ENCODE measurements at regions of chr17 and their contacts with region 1.

Region 1: GRCh38 chr17:49788478-49789242 is at the start of gene KAT7:
- DNase-seq: peak; percentile 99
- ATAC-seq: peak; percentile 96
- H3K4me3 ChIP-seq: peak within 1 kb of the TSS; percentile 91
- H3K27ac ChIP-seq: peak within 1 kb of the TSS; percentile 99
- H3K4me1 ChIP-seq: peaks cover 6% of the 10 kb centered on the region
- H3K27me3 ChIP-seq: no peaks in the 10 kb centered on the region
- CTCF ChIP-seq: peak in 1 of 3 experiments; percentile 7; a peak in 1 of 6 replicates
- EP300 ChIP-seq: peak; percentile 37 to 48; a peak in 1 of 4 replicates
- POLR2A ChIP-seq: peak; percentile 89
- RAD21 ChIP-seq: no peak
- polyA plus RNA-seq, gene KAT7: 6.6 to 8.7 TPM

Region 2: GRCh38 chr17:49343273-49343672 is 445.4 kb before region 1 on chr17:
- CTCF ChIA-PET with region 1: no interaction called
- POLR2A ChIA-PET with region 1: no interaction called
- RAD21 ChIA-PET with region 1: no interaction called
- SMC1A ChIA-PET with region 1: no interaction called
- in situ Hi-C with region 1: no loop called
- intact Hi-C with region 1: loop called (anchors 2 kb)
- DNase-seq: no peak
- ATAC-seq: peak; percentile 28
- H3K4me3 ChIP-seq: no peak overlapping the region
- H3K27ac ChIP-seq: peak overlapping the region; percentile 47
- H3K4me1 ChIP-seq: peaks cover 32% of the 10 kb centered on the region
- H3K27me3 ChIP-seq: no peaks in the 10 kb centered on the region
- CTCF ChIP-seq: no peak
- EP300 ChIP-seq: no peak
- POLR2A ChIP-seq: no peak
- RAD21 ChIP-seq: no peak

Region 3: DNA sequence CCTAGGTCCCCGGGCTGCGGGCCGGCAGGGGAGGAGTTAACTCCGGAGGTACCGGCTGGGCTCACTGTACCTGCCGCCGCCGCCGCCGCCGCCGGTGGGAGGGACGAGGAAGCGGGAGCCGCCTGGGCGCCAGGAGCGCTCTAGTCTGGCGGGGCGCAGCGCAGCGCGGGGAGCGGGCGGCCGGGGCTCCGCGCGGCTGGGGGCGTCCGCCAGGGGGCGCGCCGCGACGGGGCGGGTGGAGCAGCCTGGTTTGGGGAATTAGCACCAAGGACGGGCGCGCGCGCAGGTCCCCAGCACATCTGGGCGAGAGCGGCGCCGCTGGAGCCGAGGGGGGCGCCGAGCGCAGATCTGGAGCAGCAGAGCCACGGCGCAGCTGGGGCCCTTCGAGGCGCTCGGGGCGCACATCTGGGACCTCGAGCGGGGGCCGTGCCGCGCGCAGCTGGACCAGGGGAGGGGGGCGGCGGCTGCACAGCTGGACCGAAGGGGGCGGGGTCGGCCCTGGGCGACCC is 213.0 kb before region 1 on chr17 and contains the start of gene NXPH3:
- CTCF ChIA-PET with region 1: interaction called, 8 read pairs
- POLR2A ChIA-PET with region 1: interaction called, 3 read pairs
- RAD21 ChIA-PET with region 1: no interaction called
- SMC1A ChIA-PET with region 1: no interaction called
- in situ Hi-C with region 1: loop called (anchors 5 kb)
- intact Hi-C with region 1: no loop called
- DNase-seq: no peak
- ATAC-seq: peak; percentile 72
- H3K4me3 ChIP-seq: peak within 1 kb of the TSS; percentile 72
- H3K27ac ChIP-seq: no peak within 1 kb of the TSS
- H3K4me1 ChIP-seq: peaks cover 7% of the 10 kb centered on the region
- H3K27me3 ChIP-seq: peaks cover 2 to 8% of the 10 kb centered on the region in 2 experiments; a peak in 3 of 4 replicates
- CTCF ChIP-seq: peak; percentile 17 to 56 (median 45); a peak in 3 of 6 replicates
- EP300 ChIP-seq: no peak
- POLR2A ChIP-seq: no peak
- RAD21 ChIP-seq: peak; percentile 43
- polyA plus RNA-seq, gene NXPH3: not detected

Region 4: GRCh38 chr17:49739641-49740271 is 48.9 kb before region 1 on chr17:
- CTCF ChIA-PET with region 1: interaction called, 4 read pairs
- POLR2A ChIA-PET with region 1: interaction called, 6 read pairs
- RAD21 ChIA-PET with region 1: interaction called, 6 read pairs
- SMC1A ChIA-PET with region 1: interaction called, 16 read pairs
- in situ Hi-C with region 1: no loop called
- intact Hi-C with region 1: no loop called
- DNase-seq: no peak
- ATAC-seq: peak; percentile 77
- H3K4me3 ChIP-seq: peak overlapping the region; percentile 31; the same call in 1 of the 2 replicates
- H3K27ac ChIP-seq: peak overlapping the region; percentile 79
- H3K4me1 ChIP-seq: peaks cover 44% of the 10 kb centered on the region
- H3K27me3 ChIP-seq: no peaks in the 10 kb centered on the region
- CTCF ChIP-seq: no peak
- EP300 ChIP-seq: 0 out of 4 replicates have a peak, but pooled peaks of 1 of the 2 experiments have one; percentile 13
- POLR2A ChIP-seq: peak; percentile 45; the same call in 1 of the 2 replicates
- RAD21 ChIP-seq: no peak

Region 5: DNA sequence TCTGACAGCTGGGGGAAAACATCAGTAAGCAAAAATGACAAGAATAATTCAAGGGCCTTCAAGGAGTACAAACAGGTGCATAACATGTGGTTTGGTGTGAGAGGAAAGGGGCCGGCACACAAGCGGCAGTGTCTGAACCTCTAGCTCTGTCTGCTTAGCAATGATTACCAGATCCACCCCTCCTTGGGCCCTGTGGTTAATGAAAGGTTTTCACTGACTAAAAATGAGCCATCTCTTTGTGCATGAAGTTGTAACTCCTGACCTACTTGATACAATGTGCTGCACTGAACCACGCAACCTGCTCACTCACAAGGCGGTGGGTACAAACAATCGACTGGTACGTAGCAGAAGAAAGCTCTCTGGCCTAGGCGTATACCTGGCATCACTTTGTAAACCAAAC is 39.9 kb before region 1 on chr17:
- CTCF ChIA-PET with region 1: interaction called, 6 read pairs
- POLR2A ChIA-PET with region 1: interaction called, 17 read pairs
- RAD21 ChIA-PET with region 1: interaction called, 20 read pairs
- SMC1A ChIA-PET with region 1: interaction called, 11 read pairs
- in situ Hi-C with region 1: no loop called
- intact Hi-C with region 1: loop called (anchors 2 kb)
- DNase-seq: peak; percentile 97
- ATAC-seq: peak; percentile 91
- H3K4me3 ChIP-seq: no peak overlapping the region
- H3K27ac ChIP-seq: peak overlapping the region; percentile 92
- H3K4me1 ChIP-seq: peaks cover 57% of the 10 kb centered on the region
- H3K27me3 ChIP-seq: no peaks in the 10 kb centered on the region
- CTCF ChIP-seq: no peak
- EP300 ChIP-seq: peak; percentile 92 to 97
- POLR2A ChIP-seq: peak; percentile 52; the same call in 1 of the 2 replicates
- RAD21 ChIP-seq: no peak

Region 6: DNA sequence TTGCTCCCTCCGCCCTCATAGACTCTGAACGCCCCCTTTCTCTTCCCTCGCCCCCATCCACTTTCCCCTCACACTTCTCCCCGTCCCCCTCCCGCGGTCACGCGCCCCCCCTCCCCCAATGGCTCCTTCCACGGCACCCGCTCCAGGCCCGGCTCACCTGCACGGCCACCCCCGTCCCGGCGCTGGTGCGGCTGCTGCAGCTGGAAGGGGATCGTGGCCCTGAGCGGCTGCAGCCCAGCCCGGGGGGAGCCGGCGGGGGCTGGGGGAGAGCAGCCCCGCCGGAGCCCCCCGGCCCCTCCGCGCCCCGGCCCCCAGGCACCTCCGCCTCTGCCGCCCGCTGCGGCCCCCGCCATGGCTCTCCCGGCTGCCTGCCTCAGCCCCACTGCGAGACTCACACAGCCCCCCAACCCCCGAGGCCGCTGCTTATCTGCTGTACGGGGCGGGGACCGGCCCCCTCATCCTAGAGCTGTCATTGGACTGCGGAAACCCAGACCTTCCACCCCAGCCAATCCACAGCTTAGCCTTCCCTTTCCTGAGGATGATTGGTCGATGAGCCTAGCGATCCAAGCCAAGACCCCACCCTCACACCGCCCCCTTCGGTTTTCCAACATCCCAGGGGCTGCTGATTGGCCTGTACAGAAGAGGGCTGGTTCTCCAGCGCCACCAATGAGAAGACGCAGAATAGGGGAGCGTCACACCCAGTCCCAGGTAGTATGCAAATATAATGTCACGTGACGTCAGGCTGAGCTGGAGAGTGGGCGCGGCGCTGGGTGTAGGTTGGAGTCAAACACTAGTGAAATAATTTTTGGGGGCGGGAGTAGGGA is 24.7 kb before region 1 on chr17 and contains the start of gene FAM117A:
- CTCF ChIA-PET with region 1: interaction called, 4 read pairs
- POLR2A ChIA-PET with region 1: interaction called, 27 read pairs
- RAD21 ChIA-PET with region 1: interaction called, 10 read pairs
- SMC1A ChIA-PET with region 1: interaction called, 5 read pairs
- in situ Hi-C with region 1: no loop called
- intact Hi-C with region 1: no loop called
- DNase-seq: peak; percentile 99
- ATAC-seq: peak; percentile 98
- H3K4me3 ChIP-seq: peak within 1 kb of the TSS; percentile 86
- H3K27ac ChIP-seq: no peak within 1 kb of the TSS
- H3K4me1 ChIP-seq: peaks cover 18% of the 10 kb centered on the region
- H3K27me3 ChIP-seq: 0 out of 4 replicates have a peak, but pooled peaks cover 0 to 1% of the 10 kb centered on the region in 2 experiments
- CTCF ChIP-seq: no peak
- EP300 ChIP-seq: no peak
- POLR2A ChIP-seq: peak; percentile 97
- RAD21 ChIP-seq: no peak
- polyA plus RNA-seq, gene FAM117A: 2.1 to 3.3 TPM